ENCODE measurements at regions of chr13 and their contacts with region 1.

Region 1: GRCh38 chr13:46721054-46721453 is 75.9 kb downstream of the ESD start:
- H3K4me3 ChIP-seq: no peak overlapping the region
- H3K27ac ChIP-seq: no peak overlapping the region
- H3K4me1 ChIP-seq: 0 out of 2 replicates have a peak, but pooled peaks cover 3% of the 10 kb centered on the region
- CTCF ChIP-seq: no peak; the same call in 1 of the 2 replicates

Region 2: DNA sequence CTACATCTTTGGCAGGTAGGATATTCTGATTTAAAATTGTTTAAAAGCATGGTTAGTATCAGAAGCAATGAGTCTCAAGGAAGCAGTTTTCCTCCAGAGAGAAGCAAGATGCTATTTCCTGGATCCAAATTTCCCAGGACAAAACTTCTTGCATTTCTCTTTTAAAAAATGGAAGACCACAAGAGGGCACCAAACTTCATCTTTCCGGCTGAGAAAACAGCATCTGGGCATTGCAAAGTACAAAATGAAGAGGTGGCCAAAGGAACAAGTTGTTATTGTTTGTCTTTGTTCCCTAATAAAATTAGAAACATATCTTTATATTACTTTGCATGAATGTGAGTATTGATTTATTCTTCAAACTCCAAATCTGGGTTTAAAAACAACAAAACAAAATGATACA is 228.1 kb before region 1 on chr13:
- CTCF ChIA-PET with region 1: interaction called, 15 read pairs
- POLR2A ChIA-PET with region 1: no interaction called
- H3K4me3 ChIP-seq: no peak overlapping the region
- H3K27ac ChIP-seq: no peak overlapping the region
- H3K4me1 ChIP-seq: no peaks in the 10 kb centered on the region; the same call in 1 of the 2 replicates
- CTCF ChIP-seq: no peak

Region 3: GRCh38 chr13:46552889-46553510 is 168.1 kb before region 1 on chr13 and contains the start of gene LRCH1:
- CTCF ChIA-PET with region 1: interaction called, 32 read pairs
- POLR2A ChIA-PET with region 1: interaction called, 3 read pairs
- H3K4me3 ChIP-seq: peak within 1 kb of the TSS; percentile 65
- H3K27ac ChIP-seq: peak within 1 kb of the TSS; percentile 80
- H3K4me1 ChIP-seq: peaks cover 7% of the 10 kb centered on the region; the same call in 1 of the 2 replicates
- CTCF ChIP-seq: no peak

Region 4: DNA sequence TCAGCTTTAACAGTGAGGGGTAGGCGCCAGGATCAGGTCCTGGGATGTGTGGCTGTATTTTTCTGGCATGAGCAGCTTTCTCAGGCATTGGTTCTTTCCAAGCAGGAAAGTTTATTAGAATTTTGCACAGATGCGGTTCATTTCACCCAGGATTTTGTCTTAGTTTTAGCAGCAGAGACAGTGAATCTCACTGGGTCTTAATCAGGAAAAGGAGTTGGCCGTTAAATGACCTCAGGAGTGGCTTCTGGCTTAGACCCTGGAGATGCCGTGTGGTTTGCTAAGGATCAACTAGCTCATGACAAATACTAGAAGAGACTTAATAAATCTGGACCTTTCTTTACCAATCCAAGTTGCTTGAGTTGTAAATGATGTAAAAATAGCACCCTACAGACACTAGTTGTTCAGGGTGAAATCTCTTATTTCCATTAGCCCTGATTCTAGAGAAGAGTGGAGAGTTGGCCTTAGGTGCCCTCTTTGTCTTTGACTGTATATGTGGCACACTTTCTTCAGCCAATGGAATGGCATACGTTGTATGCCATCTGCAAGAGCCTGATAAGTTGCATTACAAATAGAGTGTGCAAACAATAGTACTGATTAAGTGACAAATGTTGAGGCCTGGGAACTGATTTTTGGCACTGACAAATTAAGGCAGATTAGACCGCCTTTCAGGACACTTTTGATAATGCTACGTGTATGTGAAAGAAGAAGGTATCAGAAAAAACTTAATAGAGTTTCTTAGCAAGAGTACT is 134.1 kb before region 1 on chr13:
- CTCF ChIA-PET with region 1: no interaction called
- POLR2A ChIA-PET with region 1: no interaction called
- H3K4me3 ChIP-seq: no peak overlapping the region
- H3K27ac ChIP-seq: no peak overlapping the region
- H3K4me1 ChIP-seq: peaks cover 22% of the 10 kb centered on the region
- CTCF ChIP-seq: no peak

Measured in HEK293 (cell line).